GM18951 (cell line): ENCODE measurements at regions of chr12 and their contacts with region 1.

Region 1: GRCh38 chr12:82326905-82327503 is 31.2 kb downstream of the CCDC59 start:
- POLR2A ChIP-seq: no peak

Region 2: DNA sequence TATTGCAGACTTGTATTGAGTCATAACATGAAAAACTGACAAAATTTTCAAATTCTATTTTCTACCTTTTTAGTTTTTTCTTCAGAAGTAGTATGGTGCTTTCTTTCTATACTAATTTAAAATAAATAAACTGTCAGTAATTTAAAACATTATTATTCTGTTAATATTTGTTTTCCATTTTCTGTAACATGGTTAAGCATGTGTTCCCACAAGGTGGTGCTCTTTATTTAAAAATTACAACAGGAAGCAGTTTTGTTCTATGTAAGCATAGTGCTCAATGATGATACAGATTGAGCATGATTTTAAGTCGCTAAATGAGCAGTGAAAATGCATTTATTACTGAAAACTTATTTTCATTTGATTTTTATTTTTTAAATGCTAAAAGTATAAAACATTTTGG is 682.5 kb before region 1 on chr12:
- in situ Hi-C with region 1: loop called (anchors 25 kb)
- POLR2A ChIP-seq: no peak

Region 3: DNA sequence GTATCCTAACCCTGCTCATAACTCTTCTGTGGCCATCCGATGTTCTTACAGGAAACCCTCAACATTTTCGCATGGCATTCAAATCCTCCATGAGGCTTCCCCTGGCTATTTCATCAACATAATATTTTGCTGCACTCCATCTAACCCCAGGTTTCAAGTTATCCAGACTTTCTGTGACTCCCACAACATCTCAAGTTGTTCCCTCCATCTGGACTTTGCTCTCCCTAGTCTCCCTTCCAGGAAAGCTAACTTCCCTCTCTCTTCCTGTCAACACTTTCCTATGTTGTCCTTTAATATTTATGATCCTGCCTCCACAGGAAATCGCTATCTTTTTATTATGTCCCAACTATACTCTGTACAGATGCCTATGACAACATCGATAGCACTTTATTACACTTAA is 177.4 kb after region 1 on chr12:
- in situ Hi-C with region 1: no loop called
- POLR2A ChIP-seq: no peak